AG04450 (cell line): ENCODE measurements at regions of chr2 and their contacts with region 1.

Region 1: DNA sequence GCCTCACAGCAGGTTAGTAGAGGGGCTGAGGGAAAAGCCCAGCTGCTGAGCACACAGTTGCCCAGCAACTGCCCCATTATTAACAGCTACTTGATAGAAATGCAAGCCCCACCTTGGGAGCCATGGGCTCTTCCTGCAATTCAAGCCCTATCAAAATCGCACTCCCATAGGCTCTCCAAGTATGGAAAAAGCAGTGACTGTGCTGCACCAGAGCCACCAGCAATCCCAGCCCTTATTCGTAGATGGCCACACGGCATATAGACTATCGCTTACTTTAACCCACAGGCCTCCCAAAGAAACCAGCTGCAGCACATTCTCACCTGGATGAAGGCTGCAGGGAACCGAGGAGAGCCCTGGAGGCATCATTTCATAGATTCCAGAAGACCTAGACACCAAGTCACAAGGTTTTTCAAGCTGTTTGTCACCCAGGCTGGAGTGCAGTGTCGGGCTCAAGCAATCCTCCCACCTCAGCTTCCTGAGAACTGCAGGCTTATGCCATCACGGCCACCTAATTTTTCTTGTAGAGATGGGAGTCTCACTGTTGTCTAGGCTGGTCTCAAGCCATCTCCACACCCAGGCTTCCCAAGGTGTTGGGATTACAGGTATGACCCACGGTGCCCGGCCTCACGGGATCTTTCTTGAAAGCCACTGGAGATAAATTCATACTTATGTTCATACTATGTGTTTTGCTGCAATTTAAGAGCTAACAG is 11.3 kb downstream of the NCL start:
- DNase-seq: no peak
- H3K4me3 ChIP-seq: no peak overlapping the region
- H3K27ac ChIP-seq: peak overlapping the region; percentile 21
- H3K27me3 ChIP-seq: no peaks in the 10 kb centered on the region
- CTCF ChIP-seq: no peak

Region 2: GRCh38 chr2:230929381-230930148 is 523.4 kb before region 1 on chr2:
- CTCF ChIA-PET with region 1: interaction called, 10 read pairs
- POLR2A ChIA-PET with region 1: no interaction called
- DNase-seq: no peak
- H3K4me3 ChIP-seq: no peak overlapping the region
- H3K27ac ChIP-seq: no peak overlapping the region
- H3K27me3 ChIP-seq: peaks cover 28% of the 10 kb centered on the region
- CTCF ChIP-seq: no peak

Region 3: GRCh38 chr2:231227309-231228162 is 225.4 kb before region 1 on chr2:
- CTCF ChIA-PET with region 1: interaction called, 39 read pairs
- POLR2A ChIA-PET with region 1: no interaction called
- DNase-seq: peak; percentile 33
- H3K4me3 ChIP-seq: no peak overlapping the region
- H3K27ac ChIP-seq: no peak overlapping the region
- H3K27me3 ChIP-seq: no peaks in the 10 kb centered on the region
- CTCF ChIP-seq: peak; percentile 86

Region 4: GRCh38 chr2:231297108-231297908 is 155.6 kb before region 1 on chr2:
- CTCF ChIA-PET with region 1: interaction called, 57 read pairs
- POLR2A ChIA-PET with region 1: interaction called, 4 read pairs
- DNase-seq: peak; percentile 37
- H3K4me3 ChIP-seq: no peak overlapping the region
- H3K27ac ChIP-seq: no peak overlapping the region
- H3K27me3 ChIP-seq: no peaks in the 10 kb centered on the region
- CTCF ChIP-seq: peak; percentile 85

Region 5: GRCh38 chr2:231411831-231412617 is 40.9 kb before region 1 on chr2:
- CTCF ChIA-PET with region 1: interaction called, 13 read pairs
- POLR2A ChIA-PET with region 1: no interaction called
- DNase-seq: peak; percentile 50
- H3K4me3 ChIP-seq: peak overlapping the region; percentile 73
- H3K27ac ChIP-seq: no peak overlapping the region
- H3K27me3 ChIP-seq: no peaks in the 10 kb centered on the region
- CTCF ChIP-seq: peak; percentile 92

Region 6: DNA sequence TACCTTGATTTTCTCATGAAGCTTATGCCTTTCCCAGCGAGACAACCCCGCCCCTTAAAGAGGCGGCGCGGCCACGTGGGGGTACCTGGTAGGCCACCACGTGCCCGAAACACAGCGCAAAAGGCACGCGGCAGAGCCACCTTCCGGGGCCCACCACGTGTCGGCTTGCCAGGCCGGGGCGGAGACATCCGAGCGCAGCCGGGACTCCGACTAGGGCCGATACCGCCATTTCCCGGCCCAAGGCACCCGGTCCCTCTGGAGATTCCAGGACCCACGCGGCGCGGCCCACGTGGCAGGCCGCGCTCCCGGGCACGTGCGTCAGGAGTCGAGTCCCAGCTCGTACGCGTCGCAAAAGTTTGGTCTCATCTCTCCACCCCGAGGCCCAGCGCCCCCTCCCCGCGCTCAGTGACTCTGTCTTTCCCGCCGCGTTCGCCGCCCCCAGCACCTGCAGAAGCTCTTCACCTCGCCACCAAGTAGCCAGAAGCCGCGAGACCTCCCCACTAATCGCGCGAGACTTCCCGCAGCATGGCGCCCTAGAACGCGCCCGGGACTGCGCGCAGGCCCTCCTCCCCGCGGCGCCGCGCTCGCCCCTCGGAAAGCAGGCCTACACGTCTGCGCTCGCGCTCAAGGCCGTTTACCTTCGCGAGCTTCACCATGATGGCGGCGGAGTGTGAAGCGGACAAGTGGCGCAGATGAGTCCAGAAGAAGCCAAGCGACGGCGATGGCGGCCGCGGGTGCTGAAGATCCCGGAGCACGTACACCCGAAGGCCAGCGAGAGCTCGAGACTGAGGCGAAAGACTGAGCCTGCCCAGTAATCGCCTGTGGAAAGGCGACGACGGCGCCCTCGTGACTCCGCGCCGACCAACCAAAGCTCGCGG is 11.0 kb after region 1 on chr2 and contains the start of gene NCL:
- CTCF ChIA-PET with region 1: interaction called, 31 read pairs
- POLR2A ChIA-PET with region 1: interaction called, 72 read pairs
- DNase-seq: peak; percentile 94
- H3K4me3 ChIP-seq: peak within 1 kb of the TSS; percentile 98
- H3K27ac ChIP-seq: peak within 1 kb of the TSS; percentile 99
- H3K27me3 ChIP-seq: no peaks in the 10 kb centered on the region
- CTCF ChIP-seq: no peak
- polyA plus RNA-seq, gene NCL: 165 and 225 TPM in 2 replicates